Adrenal gland (tissue), 19 donors: ENCODE measurements at regions of chr4 and their contacts with region 1.

Region 1: DNA sequence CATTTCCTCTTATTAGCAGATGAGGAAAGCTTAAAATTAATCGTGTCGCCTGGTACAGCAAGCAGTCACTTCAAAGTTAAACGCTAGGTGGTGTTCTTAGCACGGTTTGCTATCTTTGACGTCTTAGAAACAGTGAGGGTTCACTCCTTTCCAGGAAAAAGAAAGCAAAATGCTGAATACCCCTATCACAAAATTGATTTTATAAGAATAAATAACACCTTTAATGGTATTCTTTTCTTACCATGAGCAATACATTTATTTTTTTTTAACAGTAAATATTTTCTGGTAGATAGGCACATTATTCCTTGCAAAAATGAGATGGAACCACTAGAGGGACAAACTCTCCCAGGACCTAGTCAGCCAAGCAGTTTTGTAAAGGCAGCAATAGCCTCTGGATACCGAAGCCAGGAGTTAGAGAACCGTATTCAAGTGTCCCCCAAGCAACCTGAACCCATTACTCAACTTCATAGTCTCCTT is 153.9 kb downstream of the KDR start:
- DNase-seq: peak in 2 of 7 donors; percentile 11 to 13
- H3K4me3 ChIP-seq: no peak overlapping the region
- H3K27ac ChIP-seq: no peak overlapping the region
- H3K4me1 ChIP-seq: no peaks in the 10 kb centered on the region
- H3K27me3 ChIP-seq: no peaks in the 10 kb centered on the region
- CTCF ChIP-seq: peak; percentile 55 to 79 (median 66)
- POLR2A ChIP-seq: no peak

Region 2: DNA sequence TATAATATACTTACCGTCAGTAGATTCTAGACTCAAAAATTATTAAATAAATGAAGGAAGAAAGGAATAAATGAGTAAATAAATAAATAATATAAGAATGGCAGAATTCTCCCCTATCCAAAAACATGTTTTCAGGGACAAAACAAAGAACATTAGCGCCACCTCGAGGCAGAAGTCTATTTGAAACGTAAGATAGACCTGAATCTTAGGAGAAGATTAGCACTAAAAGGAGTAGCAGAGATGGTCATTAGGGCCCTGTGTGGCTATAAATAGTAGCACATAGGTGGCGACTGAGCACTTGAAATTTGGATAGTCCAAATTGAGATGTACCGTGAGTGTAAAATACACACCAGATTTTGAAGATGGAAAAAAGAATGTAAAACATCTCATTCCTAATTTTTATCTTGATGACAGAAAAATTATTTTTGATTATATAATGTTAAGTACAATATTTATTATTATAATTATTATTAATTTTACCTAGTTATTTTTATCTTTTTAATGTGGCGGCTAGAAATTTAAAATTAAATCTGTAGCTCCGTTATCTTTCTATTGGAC is 350.3 kb after region 1 on chr4:
- intact Hi-C with region 1: loop called (anchors 5 to 10 kb)
- DNase-seq: peak; percentile 69 to 90 (median 80)
- H3K4me3 ChIP-seq: no peak overlapping the region
- H3K27ac ChIP-seq: no peak overlapping the region
- H3K4me1 ChIP-seq: no peaks in the 10 kb centered on the region
- H3K27me3 ChIP-seq: no peaks in the 10 kb centered on the region
- CTCF ChIP-seq: peak; percentile 42 to 73 (median 62)
- POLR2A ChIP-seq: no peak